Activated T-helper 1 cell treated with anti-CD3 and anti-CD28 coated beads, Interleukin-12 subunit alpha, Interleukin-12 subunit beta, Interleukin-2, Interleukin-4 antibody, amounts not matched to agents 30 ng/mL and 10 ng/mL and 1 ng/mL, durations not matched to agents 14 hours and 24 hours and 36 hours (primary cell): ENCODE measurements at regions of chr7 and their contacts with region 1.

Region 1: GRCh38 chr7:152709287-152710152 is 33.6 kb upstream of the XRCC2 start:
- DNase-seq: no peak
- H3K4me3 Mint-ChIP-seq: no peak overlapping the region
- H3K27ac Mint-ChIP-seq: no peak overlapping the region
- H3K4me1 Mint-ChIP-seq: peaks cover 4% of the 10 kb centered on the region
- H3K27me3 Mint-ChIP-seq: peaks cover 5% of the 10 kb centered on the region

Region 2: DNA sequence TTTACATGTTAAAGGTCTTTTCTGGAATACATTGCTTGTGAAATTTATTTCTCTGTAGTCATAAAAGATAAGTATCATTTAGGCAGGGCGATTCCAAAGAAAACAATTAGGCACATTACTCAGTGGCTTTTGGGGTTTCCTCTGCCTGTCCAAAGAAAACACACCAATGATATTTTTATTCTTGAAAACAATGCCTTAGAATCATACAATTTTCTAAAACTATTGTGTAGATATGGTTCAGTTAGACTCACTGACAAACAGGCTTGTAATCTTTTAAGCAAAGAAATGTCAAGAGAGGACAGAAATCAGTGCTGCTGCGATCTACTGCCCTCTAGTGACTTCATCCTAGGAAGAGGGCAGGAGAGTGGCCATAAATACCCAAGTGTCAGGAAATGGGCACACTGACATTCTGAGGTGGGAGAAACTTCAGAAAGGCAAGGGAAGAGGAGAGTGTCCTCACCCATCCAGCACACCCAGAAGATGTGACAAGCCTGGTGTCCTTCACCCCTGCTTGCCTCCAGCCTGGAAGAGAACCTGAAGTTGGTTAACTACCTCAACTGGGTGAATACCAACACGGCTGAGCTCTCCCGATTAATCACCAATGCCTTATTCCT is 563.6 kb before region 1 on chr7:
- intact Hi-C with region 1: loop called (anchors 10 kb)
- DNase-seq: no peak
- H3K4me3 Mint-ChIP-seq: no peak overlapping the region
- H3K27ac Mint-ChIP-seq: peak overlapping the region; percentile 80
- H3K4me1 Mint-ChIP-seq: peaks cover 40% of the 10 kb centered on the region
- H3K27me3 Mint-ChIP-seq: no peaks in the 10 kb centered on the region

Region 3: DNA sequence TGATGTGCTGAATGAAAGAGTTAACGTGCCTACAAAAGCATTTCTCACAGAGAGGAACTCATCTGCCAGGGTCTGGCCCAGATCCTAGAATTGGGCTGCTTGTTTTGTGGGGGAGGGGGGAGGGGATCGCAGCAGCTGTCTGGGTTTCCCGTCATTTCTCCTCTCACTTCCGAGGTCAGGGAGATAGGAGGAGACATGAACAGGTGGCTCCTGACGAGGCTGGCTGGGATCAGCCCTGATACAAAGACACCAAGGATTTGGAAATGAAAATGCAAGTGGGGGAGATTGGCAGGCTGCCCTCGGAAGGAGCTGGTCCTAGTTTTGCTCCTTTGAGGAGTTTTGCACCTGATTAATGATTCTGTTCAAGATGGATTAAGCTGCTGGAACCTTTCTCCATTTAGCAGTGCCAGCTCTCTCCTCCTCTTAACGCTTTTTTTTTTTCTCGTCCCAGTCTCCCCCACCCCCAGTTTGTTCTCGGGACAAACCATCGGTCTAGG is 186.9 kb before region 1 on chr7:
- intact Hi-C with region 1: no loop called
- DNase-seq: no peak
- H3K4me3 Mint-ChIP-seq: no peak overlapping the region
- H3K27ac Mint-ChIP-seq: no peak overlapping the region
- H3K4me1 Mint-ChIP-seq: no peaks in the 10 kb centered on the region
- H3K27me3 Mint-ChIP-seq: peaks cover 2% of the 10 kb centered on the region

Region 4: DNA sequence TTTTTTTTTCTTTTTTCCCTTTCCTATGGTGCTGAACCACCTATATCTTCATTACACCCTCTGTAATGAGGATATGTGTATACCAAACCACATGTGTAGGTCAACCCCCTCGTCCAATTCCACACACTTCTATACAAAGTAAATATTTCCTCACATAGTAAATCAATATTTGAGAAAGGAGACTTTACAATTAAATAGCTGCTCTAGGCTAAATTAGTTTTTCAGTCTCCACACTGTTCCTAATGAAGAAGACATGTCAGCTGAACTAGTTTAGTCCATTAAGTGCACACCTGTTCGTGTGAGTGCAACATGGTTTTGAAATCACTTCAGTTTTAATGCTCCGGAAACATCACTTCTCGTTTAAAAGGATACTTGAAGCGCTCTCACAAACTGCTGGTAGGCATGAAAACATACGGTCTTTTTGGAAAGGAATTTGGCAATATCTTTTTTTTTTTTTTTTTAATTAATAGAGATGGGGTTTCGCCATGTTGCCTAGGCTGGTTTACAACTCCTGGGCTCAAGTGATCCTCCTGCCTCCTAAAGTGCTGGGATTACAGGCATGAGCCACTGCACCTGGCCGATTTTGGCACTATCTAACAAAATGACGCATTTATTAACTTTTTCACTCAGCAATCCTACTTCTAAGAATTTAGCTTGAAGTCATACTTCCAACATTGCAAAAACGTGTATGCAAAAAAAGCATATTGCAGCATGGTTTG is 31.6 kb before region 1 on chr7:
- intact Hi-C with region 1: no loop called
- DNase-seq: no peak
- H3K4me3 Mint-ChIP-seq: peak overlapping the region; percentile 57
- H3K27ac Mint-ChIP-seq: peak overlapping the region; percentile 34
- H3K4me1 Mint-ChIP-seq: peaks cover 12% of the 10 kb centered on the region
- H3K27me3 Mint-ChIP-seq: no peaks in the 10 kb centered on the region